Panc1 (cell line): ENCODE measurements at regions of chr4 and their contacts with region 1.

Region 1: GRCh38 chr4:72744103-72744725 is 175.2 kb upstream of the ADAMTS3 start:
- DNase-seq: no peak
- ATAC-seq: no peak
- H3K4me3 ChIP-seq: no peak overlapping the region
- H3K27ac ChIP-seq: no peak overlapping the region
- H3K4me1 ChIP-seq: no peaks in the 10 kb centered on the region
- H3K27me3 ChIP-seq: no peaks in the 10 kb centered on the region
- CTCF ChIP-seq: no peak

Region 2: DNA sequence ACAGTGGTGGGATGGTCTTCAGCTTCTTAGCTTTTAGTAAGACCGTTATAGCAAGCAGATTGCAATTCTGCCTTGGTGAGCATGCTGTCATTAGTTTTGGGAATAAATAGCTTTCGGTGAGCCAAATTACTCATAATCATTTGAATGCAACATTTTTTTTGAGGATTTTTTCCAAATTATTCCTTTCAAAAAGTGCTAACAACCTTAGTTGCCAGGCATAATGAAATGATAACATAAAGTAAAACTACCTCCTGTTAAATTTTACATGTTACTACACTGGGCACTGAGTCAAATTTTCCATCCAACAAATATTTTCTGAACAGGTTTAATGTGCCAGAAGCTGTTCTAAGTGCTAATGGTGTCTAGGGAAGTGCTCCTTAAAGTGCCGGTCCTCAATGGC is 728.2 kb before region 1 on chr4:
- CTCF ChIA-PET with region 1: no interaction called
- POLR2A ChIA-PET with region 1: no interaction called
- in situ Hi-C with region 1: no loop called
- intact Hi-C with region 1: no loop called
- DNase-seq: no peak
- ATAC-seq: no peak
- H3K4me3 ChIP-seq: no peak overlapping the region
- H3K27ac ChIP-seq: no peak overlapping the region
- H3K4me1 ChIP-seq: no peaks in the 10 kb centered on the region
- H3K27me3 ChIP-seq: no peaks in the 10 kb centered on the region
- CTCF ChIP-seq: no peak

Region 3: DNA sequence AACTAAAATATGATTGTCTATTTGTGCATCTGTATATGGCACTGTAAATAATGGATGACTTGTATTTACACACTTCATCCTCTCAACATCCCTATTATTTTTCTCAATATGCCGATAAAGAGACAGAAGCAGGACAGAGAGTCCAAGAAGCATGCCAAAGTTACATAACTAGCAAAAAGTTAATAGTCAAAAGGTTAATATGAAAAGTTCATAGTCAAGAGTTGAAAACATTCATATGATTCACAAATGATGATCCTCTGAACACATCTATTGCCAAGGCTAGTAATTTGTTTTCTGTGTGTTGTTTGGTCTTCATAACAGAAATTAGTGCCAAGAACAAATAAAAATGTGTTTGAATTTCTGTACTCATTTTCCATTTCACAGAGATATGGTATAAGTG is 406.2 kb before region 1 on chr4:
- CTCF ChIA-PET with region 1: no interaction called
- POLR2A ChIA-PET with region 1: interaction called, 11 read pairs
- in situ Hi-C with region 1: no loop called
- intact Hi-C with region 1: no loop called
- DNase-seq: no peak
- ATAC-seq: no peak
- H3K4me3 ChIP-seq: no peak overlapping the region
- H3K27ac ChIP-seq: no peak overlapping the region
- H3K4me1 ChIP-seq: no peaks in the 10 kb centered on the region
- H3K27me3 ChIP-seq: no peaks in the 10 kb centered on the region
- CTCF ChIP-seq: no peak

Region 4: GRCh38 chr4:72846280-72847111 is 102.3 kb after region 1 on chr4:
- CTCF ChIA-PET with region 1: no interaction called
- POLR2A ChIA-PET with region 1: no interaction called
- in situ Hi-C with region 1: no loop called
- intact Hi-C with region 1: no loop called
- DNase-seq: no peak
- ATAC-seq: no peak
- H3K4me3 ChIP-seq: no peak overlapping the region
- H3K27ac ChIP-seq: no peak overlapping the region
- H3K4me1 ChIP-seq: no peaks in the 10 kb centered on the region
- H3K27me3 ChIP-seq: no peaks in the 10 kb centered on the region
- CTCF ChIP-seq: no peak

Region 5: GRCh38 chr4:72997409-72997808 is 253.2 kb after region 1 on chr4:
- CTCF ChIA-PET with region 1: no interaction called
- POLR2A ChIA-PET with region 1: no interaction called
- in situ Hi-C with region 1: no loop called
- intact Hi-C with region 1: no loop called
- DNase-seq: no peak
- ATAC-seq: no peak
- H3K4me3 ChIP-seq: no peak overlapping the region
- H3K27ac ChIP-seq: no peak overlapping the region
- H3K4me1 ChIP-seq: no peaks in the 10 kb centered on the region
- H3K27me3 ChIP-seq: no peaks in the 10 kb centered on the region
- CTCF ChIP-seq: no peak